GM12878 (cell line): ENCODE measurements at regions of chr1 and their contacts with region 1.

Region 1: GRCh38 chr1:98053471-98054366 is 132.9 kb upstream of the DPYD start:
- DNase-seq: no peak
- ATAC-seq: peak; percentile 99
- H3K4me3 ChIP-seq: peak overlapping the region; percentile 24; the same call in 1 of the 2 replicates
- H3K27ac ChIP-seq: no peak overlapping the region
- H3K4me1 ChIP-seq: no peaks in the 10 kb centered on the region
- H3K27me3 ChIP-seq: peaks cover 1 to 11% of the 10 kb centered on the region in 2 experiments; a peak in 2 of 4 replicates
- CTCF ChIP-seq: peak; percentile 66 to 86 (median 71); a peak in 5 of 6 replicates
- EP300 ChIP-seq: no peak
- POLR2A ChIP-seq: no peak
- RAD21 ChIP-seq: peak; percentile 85

Region 2: DNA sequence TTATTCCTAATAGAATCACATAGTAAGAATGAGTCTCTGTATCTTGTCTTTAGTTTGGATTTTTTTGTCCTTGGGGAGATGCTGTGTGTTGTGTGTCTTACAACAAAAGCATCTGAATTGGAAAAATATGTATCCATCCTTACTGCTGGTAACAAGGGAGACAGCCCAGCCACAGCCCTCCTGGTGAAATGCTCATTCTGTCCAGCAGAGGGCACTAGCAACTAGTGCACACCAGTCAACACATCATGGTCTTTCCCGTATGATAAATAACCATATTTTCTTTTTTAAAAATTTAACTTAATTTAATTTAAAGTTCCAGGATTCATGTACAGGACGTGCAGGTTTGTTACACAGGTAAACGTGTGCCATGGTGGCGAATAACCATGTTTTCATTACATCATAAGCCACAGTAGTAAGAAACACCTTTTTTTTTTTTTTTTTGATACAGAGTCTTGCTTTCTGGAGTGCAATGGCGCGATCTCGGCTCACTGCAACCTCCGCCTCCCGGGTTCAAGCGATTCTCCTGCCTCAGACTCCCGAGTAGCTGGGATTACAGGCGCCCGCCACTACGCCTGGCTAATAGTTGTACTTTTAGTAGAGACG is 1087.1 kb before region 1 on chr1:
- CTCF ChIA-PET with region 1: interaction called, 10 read pairs
- POLR2A ChIA-PET with region 1: no interaction called
- RAD21 ChIA-PET with region 1: interaction called, 6 read pairs
- SMC1A ChIA-PET with region 1: interaction called, 5 read pairs
- in situ Hi-C with region 1: loop called (anchors 5 kb)
- intact Hi-C with region 1: loop called (anchors 1 kb)
- DNase-seq: peak; percentile 28
- ATAC-seq: peak; percentile 95
- H3K4me3 ChIP-seq: no peak overlapping the region
- H3K27ac ChIP-seq: no peak overlapping the region
- H3K4me1 ChIP-seq: no peaks in the 10 kb centered on the region
- H3K27me3 ChIP-seq: no peaks in the 10 kb centered on the region
- CTCF ChIP-seq: peak; percentile 89 to 90 (median 89)
- EP300 ChIP-seq: no peak
- POLR2A ChIP-seq: no peak
- RAD21 ChIP-seq: peak; percentile 94

Region 3: GRCh38 chr1:97137862-97138514 is 915.7 kb before region 1 on chr1:
- CTCF ChIA-PET with region 1: interaction called, 8 read pairs
- POLR2A ChIA-PET with region 1: no interaction called
- RAD21 ChIA-PET with region 1: interaction called, 11 read pairs
- SMC1A ChIA-PET with region 1: interaction called, 8 read pairs
- in situ Hi-C with region 1: loop called (anchors 10 kb)
- intact Hi-C with region 1: loop called (anchors 1 kb)
- DNase-seq: peak; percentile 20
- ATAC-seq: peak; percentile 99
- H3K4me3 ChIP-seq: 0 out of 2 replicates have a peak overlapping the region, but pooled peaks have one; percentile 1
- H3K27ac ChIP-seq: no peak overlapping the region
- H3K4me1 ChIP-seq: peaks cover 2% of the 10 kb centered on the region; the same call in 1 of the 2 replicates
- H3K27me3 ChIP-seq: no peaks in the 10 kb centered on the region
- CTCF ChIP-seq: peak; percentile 64 to 75 (median 74)
- EP300 ChIP-seq: no peak
- POLR2A ChIP-seq: no peak
- RAD21 ChIP-seq: peak; percentile 80

Region 4: DNA sequence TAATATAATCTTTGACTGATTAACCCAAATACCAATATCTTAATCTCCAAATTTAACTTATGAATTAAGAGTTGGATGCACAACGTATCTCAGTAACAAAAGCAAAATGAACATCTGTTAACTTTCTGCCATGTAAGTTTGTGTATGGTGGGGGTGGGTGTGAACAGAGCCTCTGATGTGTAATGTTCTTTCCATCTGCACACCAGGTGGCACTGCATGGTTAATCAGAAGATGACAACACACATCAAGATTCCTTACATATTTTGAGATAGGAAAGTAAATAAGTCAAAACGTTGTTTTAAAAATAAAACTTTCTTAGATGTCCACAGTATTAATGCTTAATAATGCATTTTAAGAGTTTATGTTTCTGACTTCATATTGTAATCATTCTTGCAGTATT is 384.8 kb before region 1 on chr1:
- CTCF ChIA-PET with region 1: interaction called, 3 read pairs
- POLR2A ChIA-PET with region 1: no interaction called
- RAD21 ChIA-PET with region 1: interaction called, 3 read pairs
- SMC1A ChIA-PET with region 1: interaction called, 4 read pairs
- in situ Hi-C with region 1: no loop called
- intact Hi-C with region 1: loop called (anchors 2 kb)
- DNase-seq: no peak
- ATAC-seq: peak; percentile 52; the same call in 1 of the 3 replicates
- H3K4me3 ChIP-seq: no peak overlapping the region
- H3K27ac ChIP-seq: no peak overlapping the region
- H3K4me1 ChIP-seq: no peaks in the 10 kb centered on the region
- H3K27me3 ChIP-seq: no peaks in the 10 kb centered on the region
- CTCF ChIP-seq: peak in 2 of 3 experiments; percentile 19 to 37; a peak in 2 of 6 replicates
- EP300 ChIP-seq: no peak
- POLR2A ChIP-seq: no peak
- RAD21 ChIP-seq: peak; percentile 43

Region 5: GRCh38 chr1:98468111-98468717 is 414.5 kb after region 1 on chr1:
- CTCF ChIA-PET with region 1: interaction called, 17 read pairs
- POLR2A ChIA-PET with region 1: no interaction called
- RAD21 ChIA-PET with region 1: no interaction called
- SMC1A ChIA-PET with region 1: interaction called, 5 read pairs
- in situ Hi-C with region 1: no loop called
- intact Hi-C with region 1: loop called (anchors 1 kb)
- DNase-seq: no peak
- ATAC-seq: no peak
- H3K4me3 ChIP-seq: no peak overlapping the region
- H3K27ac ChIP-seq: no peak overlapping the region
- H3K4me1 ChIP-seq: no peaks in the 10 kb centered on the region
- H3K27me3 ChIP-seq: no peaks in the 10 kb centered on the region
- CTCF ChIP-seq: peak; percentile 36 to 61 (median 57); a peak in 4 of 6 replicates
- EP300 ChIP-seq: no peak
- POLR2A ChIP-seq: no peak
- RAD21 ChIP-seq: peak; percentile 80